Pancreas (tissue), 10 donors: ENCODE measurements at regions of chr12 and their contacts with region 1.

Region 1: GRCh38 chr12:15532364-15532977 is 210.2 kb downstream of the PTPRO start:
- DNase-seq: no peak
- ATAC-seq: peak in 3 of 4 donors; percentile 48 to 67 (median 52)
- H3K4me3 ChIP-seq: no peak overlapping the region
- H3K27ac ChIP-seq: no peak overlapping the region
- H3K4me1 ChIP-seq: no peaks in the 10 kb centered on the region
- H3K27me3 ChIP-seq: no peaks in the 10 kb centered on the region
- CTCF ChIP-seq: peak in 1 of 4 donors; percentile 17

Region 2: GRCh38 chr12:15268927-15269552 is 263.4 kb before region 1 on chr12:
- intact Hi-C with region 1: loop called in 1 of 3 experiments (anchors 10 kb)
- DNase-seq: peak in 3 of 6 donors; percentile 17 to 35 (median 17)
- ATAC-seq: peak in 3 of 4 donors; percentile 89 to 95 (median 91)
- H3K4me3 ChIP-seq: no peak overlapping the region
- H3K27ac ChIP-seq: no peak overlapping the region
- H3K4me1 ChIP-seq: no peaks in the 10 kb centered on the region
- H3K27me3 ChIP-seq: no peaks in the 10 kb centered on the region
- CTCF ChIP-seq: peak; percentile 41 to 75 (median 72)

Region 3: GRCh38 chr12:15494329-15495046 is 38.0 kb before region 1 on chr12:
- intact Hi-C with region 1: no loop called
- DNase-seq: no peak
- ATAC-seq: no peak
- H3K4me3 ChIP-seq: no peak overlapping the region
- H3K27ac ChIP-seq: no peak overlapping the region
- H3K4me1 ChIP-seq: peaks cover 0 to 8% (median 0%) of the 10 kb centered on the region in 3 donors
- H3K27me3 ChIP-seq: peaks cover 0 to 1% (median 0%) of the 10 kb centered on the region in 4 donors
- CTCF ChIP-seq: no peak